Right ventricle myocardium inferior (tissue), 1 donor: ENCODE measurements at regions of chr19 and their contacts with region 1.

Region 1: GRCh38 chr19:6125571-6125989 is 9.9 kb upstream of the ACSBG2 start:
- DNase-seq: no peak
- ATAC-seq: peak; percentile 80

Region 2: GRCh38 chr19:5987077-5987818 is 138.3 kb before region 1 on chr19:
- intact Hi-C with region 1: loop called (anchors 5 kb)
- DNase-seq: no peak
- ATAC-seq: peak; percentile 47

Region 3: GRCh38 chr19:6048808-6049405 is 76.7 kb before region 1 on chr19:
- intact Hi-C with region 1: loop called (anchors 1 kb)
- DNase-seq: peak; percentile 88
- ATAC-seq: peak; percentile 97

Region 4: DNA sequence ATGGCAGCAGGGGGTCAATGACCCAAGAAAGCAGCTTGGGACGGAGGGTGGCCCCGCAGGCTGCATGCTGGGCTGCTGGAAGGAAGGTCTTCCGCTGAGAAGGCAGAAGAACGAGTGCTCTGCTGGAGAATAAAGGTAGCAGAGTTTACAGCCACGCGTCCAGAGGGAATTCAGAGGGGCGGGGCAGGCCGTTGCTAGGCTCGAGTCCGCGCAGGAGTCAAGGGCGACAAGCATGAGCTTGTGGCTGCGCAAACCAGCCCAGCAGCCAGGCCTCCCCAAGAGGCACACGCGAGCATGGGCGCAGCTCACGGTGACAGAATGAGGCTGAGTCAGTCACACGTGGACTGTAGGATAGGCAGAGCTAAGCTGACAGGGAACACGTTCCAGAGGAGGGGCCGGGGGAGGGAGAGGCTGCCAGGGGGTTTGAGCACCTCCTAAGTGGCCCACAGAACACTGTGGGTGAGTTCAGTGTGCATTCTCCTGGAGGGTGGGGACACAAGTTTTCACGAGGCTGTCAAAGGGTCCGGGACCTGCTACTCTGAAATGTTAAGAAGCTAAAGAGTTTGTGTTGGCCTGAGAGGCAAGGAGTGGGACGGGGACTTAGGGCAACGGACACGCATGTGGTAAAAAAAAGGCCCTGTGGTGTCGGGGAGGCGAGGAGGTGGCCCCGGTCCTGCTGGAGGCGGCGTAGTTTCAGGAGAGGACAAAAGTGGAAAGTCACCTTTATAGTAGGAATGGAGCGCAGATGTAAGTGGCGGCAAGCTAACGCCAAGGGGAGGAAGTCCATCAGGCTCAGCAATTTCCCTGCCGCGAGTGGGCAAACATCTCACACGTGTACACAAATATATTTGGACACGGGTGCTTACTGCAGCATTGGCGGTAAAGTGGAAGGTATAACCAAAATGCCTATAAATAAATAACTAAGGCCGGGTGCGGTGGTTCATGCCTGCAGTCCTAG is 33.0 kb before region 1 on chr19:
- intact Hi-C with region 1: no loop called
- DNase-seq: peak; percentile 89
- ATAC-seq: peak; percentile 91

Region 5: GRCh38 chr19:6150289-6150688 is 24.7 kb after region 1 on chr19:
- intact Hi-C with region 1: no loop called
- DNase-seq: no peak
- ATAC-seq: no peak